SK-N-SH (cell line): ENCODE measurements at regions of chr10 and their contacts with region 1.

Region 1: GRCh38 chr10:70903262-70903921 is 15.0 kb upstream of the PCBD1 start:
- DNase-seq: peak; percentile 85
- H3K4me3 ChIP-seq: no peak overlapping the region; a peak in 1 of 4 replicates
- H3K27ac ChIP-seq: peak overlapping the region in 1 of 2 experiments; percentile 12; a peak in 1 of 4 replicates
- H3K4me1 ChIP-seq: peaks cover 0 to 8% of the 10 kb centered on the region in 2 experiments; a peak in 1 of 4 replicates
- H3K27me3 ChIP-seq: no peaks in the 10 kb centered on the region
- CTCF ChIP-seq: peak; percentile 88
- EP300 ChIP-seq: no peak
- RAD21 ChIP-seq: peak; percentile 91

Region 2: GRCh38 chr10:70887804-70888800 is 15.3 kb before region 1 on chr10 and contains the start of gene PCBD1:
- CTCF ChIA-PET with region 1: interaction called, 27 read pairs
- POLR2A ChIA-PET with region 1: interaction called, 3 read pairs
- DNase-seq: peak; percentile 88
- H3K4me3 ChIP-seq: peak within 1 kb of the TSS; percentile 72 to 76
- H3K27ac ChIP-seq: peak within 1 kb of the TSS; percentile 57 to 96; a peak in 3 of 4 replicates
- H3K4me1 ChIP-seq: peaks cover 6 to 47% of the 10 kb centered on the region in 2 experiments; a peak in 2 of 4 replicates
- H3K27me3 ChIP-seq: no peaks in the 10 kb centered on the region
- CTCF ChIP-seq: no peak
- EP300 ChIP-seq: no peak
- RAD21 ChIP-seq: no peak
- polyA plus RNA-seq, gene PCBD1: 95.9 and 112 TPM in 2 replicates

Region 3: DNA sequence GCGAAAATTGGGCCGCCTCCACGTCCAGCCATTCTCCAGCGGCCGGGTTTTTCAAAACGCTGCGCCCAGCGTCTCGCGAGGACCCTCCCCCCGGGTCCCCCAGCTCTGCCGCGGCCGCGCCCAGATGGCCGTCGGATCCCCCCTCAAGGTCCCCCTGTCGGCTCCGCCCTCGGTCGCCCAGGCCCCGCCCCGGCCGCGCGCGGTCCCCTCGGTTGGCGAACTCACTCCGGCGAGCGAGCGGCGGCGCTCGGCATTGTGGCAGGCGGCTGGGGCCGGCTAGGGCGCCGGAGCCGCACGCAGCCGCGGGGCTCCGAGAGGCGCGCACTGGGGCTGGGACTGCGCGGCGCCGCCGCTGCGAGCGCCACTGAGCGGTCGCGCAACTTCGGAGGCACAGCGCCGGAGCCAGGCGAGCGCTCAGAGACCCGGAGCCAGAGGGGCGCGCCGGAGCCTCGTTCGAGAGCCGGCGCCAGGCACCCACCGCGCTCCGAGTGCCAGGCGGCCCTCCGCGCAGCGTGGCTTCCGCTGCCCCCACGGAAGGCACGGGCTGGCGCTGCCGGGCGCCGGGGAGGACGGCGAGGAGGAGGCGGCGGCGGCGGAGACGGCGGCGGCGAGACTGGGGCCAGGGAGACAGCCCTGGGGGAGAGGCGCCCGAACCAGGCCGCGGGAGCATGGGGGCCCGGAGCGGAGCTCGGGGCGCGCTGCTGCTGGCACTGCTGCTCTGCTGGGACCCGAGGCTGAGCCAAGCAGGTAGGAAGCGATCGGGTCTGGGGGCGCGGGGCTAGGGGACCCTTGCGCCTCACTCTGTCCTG is 309.1 kb after region 1 on chr10 and contains the start of gene UNC5B:
- CTCF ChIA-PET with region 1: interaction called, 48 read pairs
- POLR2A ChIA-PET with region 1: interaction called, 3 read pairs
- DNase-seq: peak; percentile 97
- H3K4me3 ChIP-seq: peak within 1 kb of the TSS; percentile 90 to 98
- H3K27ac ChIP-seq: peak within 1 kb of the TSS; percentile 90 to 91
- H3K4me1 ChIP-seq: peaks cover 17 to 57% of the 10 kb centered on the region in 2 experiments; a peak in 2 of 4 replicates
- H3K27me3 ChIP-seq: peaks cover 7% of the 10 kb centered on the region; the same call in 1 of the 2 replicates
- CTCF ChIP-seq: no peak; the same call in 1 of the 2 replicates
- EP300 ChIP-seq: 0 out of 4 replicates have a peak, but pooled peaks of 1 of the 2 experiments have one; percentile 23
- RAD21 ChIP-seq: peak; percentile 12
- polyA plus RNA-seq, gene UNC5B: 12.2 and 13.8 TPM in 2 replicates

Region 4: GRCh38 chr10:71244431-71245419 is 341.3 kb after region 1 on chr10:
- CTCF ChIA-PET with region 1: interaction called, 19 read pairs
- POLR2A ChIA-PET with region 1: no interaction called
- DNase-seq: peak; percentile 81
- H3K4me3 ChIP-seq: no peak overlapping the region; a peak in 2 of 4 replicates
- H3K27ac ChIP-seq: peak overlapping the region; percentile 60 to 100; a peak in 3 of 4 replicates
- H3K4me1 ChIP-seq: peaks cover 60 to 99% of the 10 kb centered on the region in 2 experiments
- H3K27me3 ChIP-seq: no peaks in the 10 kb centered on the region
- CTCF ChIP-seq: no peak
- EP300 ChIP-seq: peak; percentile 7 to 50; a peak in 2 of 4 replicates
- RAD21 ChIP-seq: no peak; the same call in 1 of the 2 replicates

Region 5: DNA sequence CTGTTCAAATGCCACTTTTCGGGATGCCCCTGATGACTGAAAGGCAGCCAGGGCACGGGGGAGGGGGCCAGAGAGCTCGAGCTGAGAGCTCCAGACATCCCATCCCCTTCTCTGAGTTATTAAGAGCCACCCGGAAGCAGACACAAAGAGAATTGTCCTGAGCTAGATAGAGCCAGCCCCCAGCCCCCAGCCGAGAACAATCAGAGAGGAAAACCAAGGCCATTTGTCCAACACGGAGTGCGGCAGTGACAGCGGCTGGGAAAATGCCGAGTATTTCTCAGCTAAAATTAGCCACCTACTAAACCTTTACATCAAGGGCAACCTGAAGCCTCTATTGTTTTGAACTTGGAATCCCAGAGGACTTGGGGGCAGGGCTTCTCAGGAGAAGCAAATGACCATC is 360.0 kb after region 1 on chr10:
- CTCF ChIA-PET with region 1: interaction called, 14 read pairs
- POLR2A ChIA-PET with region 1: no interaction called
- DNase-seq: no peak
- H3K4me3 ChIP-seq: no peak overlapping the region
- H3K27ac ChIP-seq: peak overlapping the region; percentile 4 to 94; a peak in 3 of 4 replicates
- H3K4me1 ChIP-seq: peaks cover 52 to 95% of the 10 kb centered on the region in 2 experiments
- H3K27me3 ChIP-seq: no peaks in the 10 kb centered on the region
- CTCF ChIP-seq: no peak
- EP300 ChIP-seq: no peak
- RAD21 ChIP-seq: no peak

Region 6: DNA sequence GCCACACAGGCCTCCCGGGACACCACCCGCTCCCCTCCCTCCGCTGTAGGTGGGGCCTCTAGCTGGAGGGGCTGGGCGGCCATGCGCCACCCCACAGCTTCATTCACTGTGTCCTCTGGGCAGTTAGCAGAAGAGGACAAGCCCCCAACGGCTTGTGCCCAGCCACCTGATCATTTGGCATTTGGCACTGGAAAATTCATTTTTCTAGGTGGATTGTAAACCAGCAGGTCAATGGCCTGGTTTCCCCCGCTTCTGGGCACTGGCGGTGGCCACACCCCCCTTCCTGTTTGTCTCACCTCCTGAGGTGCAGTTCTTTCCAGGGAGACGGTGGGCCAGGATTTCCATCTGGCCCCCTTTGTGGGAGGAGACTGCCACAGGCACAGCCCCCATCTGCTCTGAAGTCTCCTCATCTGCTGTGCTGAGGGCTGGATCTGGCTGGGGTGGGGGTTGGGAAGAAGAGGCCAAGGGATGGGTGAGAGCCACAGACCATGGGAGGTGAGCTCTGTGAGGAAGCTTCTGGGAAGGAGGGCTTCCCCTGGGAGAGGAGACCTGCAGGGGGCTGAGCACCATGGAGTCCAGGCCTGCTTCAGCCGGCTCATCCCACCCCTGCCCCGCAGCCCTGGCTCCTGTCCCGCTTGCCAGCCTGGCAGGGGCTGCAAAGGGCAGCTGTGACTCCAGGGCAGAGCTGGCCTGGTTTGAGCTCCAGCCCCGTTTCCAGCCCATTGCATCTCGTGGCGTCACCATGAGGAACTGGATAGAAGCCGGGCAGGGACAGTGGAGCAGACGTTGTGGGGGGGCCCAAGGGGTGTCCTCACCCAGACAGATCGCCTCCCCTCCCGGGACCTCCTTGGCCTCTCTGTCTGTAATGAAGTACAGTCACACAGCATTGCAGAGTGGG is 375.5 kb after region 1 on chr10:
- CTCF ChIA-PET with region 1: interaction called, 43 read pairs
- POLR2A ChIA-PET with region 1: no interaction called
- DNase-seq: peak; percentile 90
- H3K4me3 ChIP-seq: no peak overlapping the region; a peak in 1 of 4 replicates
- H3K27ac ChIP-seq: peak overlapping the region in 1 of 2 experiments; percentile 99; a peak in 2 of 4 replicates
- H3K4me1 ChIP-seq: peaks cover 0 to 67% of the 10 kb centered on the region in 2 experiments; a peak in 3 of 4 replicates
- H3K27me3 ChIP-seq: no peaks in the 10 kb centered on the region
- CTCF ChIP-seq: no peak
- EP300 ChIP-seq: peak in 1 of 2 experiments; percentile 91; a peak in 2 of 4 replicates
- RAD21 ChIP-seq: peak; percentile 23; the same call in 1 of the 2 replicates

Region 7: GRCh38 chr10:71293446-71294084 is 390.2 kb after region 1 on chr10:
- CTCF ChIA-PET with region 1: interaction called, 38 read pairs
- POLR2A ChIA-PET with region 1: no interaction called
- DNase-seq: no peak
- H3K4me3 ChIP-seq: no peak overlapping the region
- H3K27ac ChIP-seq: peak overlapping the region in 1 of 2 experiments; percentile 43; a peak in 1 of 4 replicates
- H3K4me1 ChIP-seq: peaks cover 0 to 15% of the 10 kb centered on the region in 2 experiments; a peak in 1 of 4 replicates
- H3K27me3 ChIP-seq: no peaks in the 10 kb centered on the region
- CTCF ChIP-seq: no peak
- EP300 ChIP-seq: no peak
- RAD21 ChIP-seq: no peak